ENCODE measurements at regions of chr10 and their contacts with region 1.

Region 1: DNA sequence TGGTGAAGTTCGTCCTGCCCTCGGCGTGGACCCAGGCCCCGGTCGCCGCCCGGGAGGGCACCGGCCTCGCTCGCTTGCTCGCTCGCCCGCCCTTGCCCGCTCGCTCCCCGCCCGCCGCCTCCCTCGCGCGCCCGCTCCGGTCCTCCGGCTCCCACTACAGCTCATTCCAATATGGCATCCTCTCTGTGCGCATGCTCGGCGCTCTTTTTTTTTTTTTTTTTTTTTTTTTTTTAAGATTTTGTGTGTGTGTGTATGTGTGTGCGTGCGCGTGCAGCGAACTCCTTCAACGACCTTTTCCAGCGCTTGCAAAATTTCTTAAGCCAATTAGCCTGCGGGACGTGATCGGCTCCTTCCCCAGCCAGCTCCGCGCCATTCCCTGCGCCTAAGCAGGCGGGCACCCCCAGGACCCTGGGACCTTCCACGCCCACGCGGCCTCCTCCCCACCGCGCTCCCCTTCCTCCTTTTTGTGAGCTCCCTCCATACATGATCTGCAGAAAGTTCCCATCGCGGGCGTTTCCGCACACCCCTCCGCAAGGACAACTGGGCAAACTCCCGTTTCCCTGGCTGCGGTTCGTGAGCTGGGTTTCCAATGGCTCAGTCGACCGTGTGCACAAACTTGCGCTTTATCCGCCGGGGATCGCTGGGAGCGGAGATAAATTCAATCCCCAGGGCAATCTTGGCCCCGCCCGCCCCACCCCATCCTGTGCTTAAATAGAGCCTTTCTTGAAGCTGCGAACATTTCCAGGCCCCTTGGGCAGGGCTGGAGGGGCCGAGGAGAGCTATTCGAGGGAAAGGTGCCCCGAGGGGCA is at the start of gene SFMBT2:
- DNase-seq: peak; percentile 47 to 81 (median 60)
- ATAC-seq: peak; percentile 37 to 52
- H3K4me3 Mint-ChIP-seq: peak within 1 kb of the TSS; percentile 91 to 99 (median 96)
- H3K27ac Mint-ChIP-seq: peak within 1 kb of the TSS; percentile 79 to 98 (median 95)
- H3K4me1 Mint-ChIP-seq: peaks cover 21 to 47% (median 31%) of the 10 kb centered on the region in 4 donors
- H3K27me3 Mint-ChIP-seq: peaks cover 0 to 4% (median 0%) of the 10 kb centered on the region in 5 donors
- polyA plus RNA-seq, gene SFMBT2: 2.2 to 6.7 (median 4.8) TPM

Region 2: GRCh38 chr10:7258948-7259523 is 152.0 kb before region 1 on chr10:
- POLR2A ChIA-PET with region 1: interaction called, 12 read pairs
- DNase-seq: peak; percentile 42 to 90 (median 74)
- ATAC-seq: peak; percentile 88 to 94
- H3K4me3 Mint-ChIP-seq: peak overlapping the region; percentile 47 to 87 (median 71)
- H3K27ac Mint-ChIP-seq: peak overlapping the region; percentile 75 to 98 (median 91)
- H3K4me1 Mint-ChIP-seq: peaks cover 34 to 69% (median 65%) of the 10 kb centered on the region in 4 donors
- H3K27me3 Mint-ChIP-seq: no peaks in the 10 kb centered on the region

Region 3: DNA sequence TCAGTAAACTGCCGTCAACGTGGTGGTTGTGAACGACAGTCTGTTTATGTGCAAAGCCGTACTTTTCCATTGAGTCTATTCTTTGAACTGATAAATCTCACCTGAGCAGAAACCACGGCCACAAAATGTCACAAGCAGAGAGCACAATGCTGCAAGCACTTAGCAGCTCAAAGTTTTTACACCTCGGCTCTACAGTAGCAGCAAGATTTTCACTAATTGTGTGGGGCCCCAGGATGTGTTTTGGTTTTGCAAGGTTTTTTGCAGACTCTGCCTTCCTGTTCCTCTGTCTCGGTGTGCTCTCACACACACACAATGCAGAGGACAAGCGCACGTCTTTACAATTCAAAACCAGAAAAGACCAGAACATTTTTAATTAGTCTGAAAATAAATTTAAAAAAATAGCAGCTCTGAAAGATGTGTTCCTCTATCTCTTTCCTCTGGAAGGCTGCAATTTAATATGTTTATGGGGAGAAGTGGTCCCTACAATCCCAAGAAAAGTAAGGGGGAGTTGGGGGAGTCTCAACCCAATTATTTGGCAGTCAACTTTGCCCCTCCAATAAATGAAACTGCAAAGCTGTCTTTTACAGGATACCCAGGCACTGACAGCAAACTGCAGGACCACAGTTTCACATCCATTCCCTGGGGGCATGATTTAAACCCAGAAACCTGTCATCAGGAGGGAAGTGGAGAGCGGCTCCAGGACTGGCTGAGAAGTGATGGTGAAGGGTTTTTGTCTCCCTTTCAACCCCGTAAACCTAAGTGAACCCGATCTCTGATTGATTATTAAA is 73.6 kb after region 1 on chr10:
- POLR2A ChIA-PET with region 1: interaction called, 22 read pairs
- DNase-seq: peak; percentile 17 to 88 (median 66)
- ATAC-seq: peak; percentile 88 to 90
- H3K4me3 Mint-ChIP-seq: peak overlapping the region; percentile 53 to 85 (median 79)
- H3K27ac Mint-ChIP-seq: peak overlapping the region; percentile 82 to 100 (median 96)
- H3K4me1 Mint-ChIP-seq: peaks cover 50 to 92% (median 88%) of the 10 kb centered on the region in 4 donors
- H3K27me3 Mint-ChIP-seq: no peaks in the 10 kb centered on the region

Region 4: GRCh38 chr10:7507887-7508726 is 97.0 kb after region 1 on chr10:
- POLR2A ChIA-PET with region 1: interaction called, 11 read pairs
- DNase-seq: peak in 6 of 10 donors; percentile 10 to 51 (median 32)
- ATAC-seq: peak; percentile 65 to 79
- H3K4me3 Mint-ChIP-seq: peak overlapping the region in 9 of 10 donors; percentile 39 to 83 (median 75)
- H3K27ac Mint-ChIP-seq: peak overlapping the region; percentile 85 to 97 (median 92)
- H3K4me1 Mint-ChIP-seq: peaks cover 40 to 67% (median 58%) of the 10 kb centered on the region in 4 donors
- H3K27me3 Mint-ChIP-seq: no peaks in the 10 kb centered on the region

Measured in naive thymus-derived CD8-positive, alpha-beta T cell (primary cell).